ENCODE measurements at regions of chr20 and their contacts with region 1.

Region 1: GRCh38 chr20:18276821-18277220 is 11.5 kb upstream of the ZNF133 start:
- DNase-seq: peak; percentile 83
- ATAC-seq: peak; percentile 93
- H3K4me3 Mint-ChIP-seq: no peak overlapping the region
- H3K27ac Mint-ChIP-seq: no peak overlapping the region
- H3K4me1 Mint-ChIP-seq: peaks cover 4% of the 10 kb centered on the region
- H3K27me3 Mint-ChIP-seq: peaks cover 32% of the 10 kb centered on the region
- CTCF ChIP-seq: peak; percentile 87

Region 2: DNA sequence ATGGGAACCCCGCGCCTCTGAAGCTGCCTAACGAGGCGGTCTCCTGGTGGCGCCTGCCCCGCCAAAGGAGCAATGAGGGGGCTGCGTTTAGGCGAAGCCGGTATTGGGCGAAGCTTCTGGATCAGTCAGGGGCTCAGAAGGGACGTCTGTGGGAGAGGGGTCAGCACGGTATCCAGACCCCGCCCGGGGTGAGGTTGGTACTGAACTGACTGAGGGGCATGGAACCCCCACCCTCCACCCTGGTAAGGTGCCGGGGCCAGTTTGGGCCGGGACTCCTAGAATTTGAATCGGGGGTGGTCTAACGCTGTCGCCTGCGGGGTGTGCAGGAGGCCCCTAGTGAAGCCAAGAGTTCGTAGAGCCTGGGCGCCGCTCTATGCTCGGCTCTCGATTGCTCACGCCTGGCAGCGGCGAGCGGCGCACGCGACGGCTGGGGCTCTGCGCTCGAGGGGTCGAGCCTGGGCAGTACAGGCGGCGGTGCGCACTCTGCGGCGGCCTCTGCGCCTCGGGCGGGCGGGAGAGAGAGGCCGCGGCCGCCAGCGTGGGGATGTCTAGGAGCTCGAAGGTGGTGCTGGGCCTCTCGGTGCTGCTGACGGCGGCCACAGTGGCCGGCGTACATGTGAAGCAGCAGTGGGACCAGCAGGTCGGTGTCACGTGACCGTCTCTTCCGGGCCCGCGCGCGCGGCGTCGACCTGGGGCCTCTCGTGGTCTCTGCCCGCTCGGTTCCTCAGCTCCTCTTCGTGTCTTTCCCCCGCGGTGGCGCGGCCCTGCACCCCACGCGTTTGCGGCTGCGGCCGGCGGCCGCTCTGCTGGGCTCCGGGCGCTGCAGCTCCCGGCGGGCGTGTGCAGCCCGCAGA is 139.2 kb before region 1 on chr20 and contains the starts of genes KAT14 and PET117:
- CTCF ChIA-PET with region 1: no interaction called
- POLR2A ChIA-PET with region 1: no interaction called
- intact Hi-C with region 1: loop called (anchors 5 kb)
- DNase-seq: peak; percentile 89
- ATAC-seq: peak; percentile 92
- H3K4me3 Mint-ChIP-seq: peak within 1 kb of the TSS; percentile 71
- H3K27ac Mint-ChIP-seq: peak within 1 kb of the TSS; percentile 90
- H3K4me1 Mint-ChIP-seq: peaks cover 30% of the 10 kb centered on the region
- H3K27me3 Mint-ChIP-seq: no peaks in the 10 kb centered on the region
- CTCF ChIP-seq: no peak
- total RNA-seq, gene KAT14: 17.9 to 18.4 TPM
- total RNA-seq, gene PET117: 17.2 to 19.4 TPM

Region 3: DNA sequence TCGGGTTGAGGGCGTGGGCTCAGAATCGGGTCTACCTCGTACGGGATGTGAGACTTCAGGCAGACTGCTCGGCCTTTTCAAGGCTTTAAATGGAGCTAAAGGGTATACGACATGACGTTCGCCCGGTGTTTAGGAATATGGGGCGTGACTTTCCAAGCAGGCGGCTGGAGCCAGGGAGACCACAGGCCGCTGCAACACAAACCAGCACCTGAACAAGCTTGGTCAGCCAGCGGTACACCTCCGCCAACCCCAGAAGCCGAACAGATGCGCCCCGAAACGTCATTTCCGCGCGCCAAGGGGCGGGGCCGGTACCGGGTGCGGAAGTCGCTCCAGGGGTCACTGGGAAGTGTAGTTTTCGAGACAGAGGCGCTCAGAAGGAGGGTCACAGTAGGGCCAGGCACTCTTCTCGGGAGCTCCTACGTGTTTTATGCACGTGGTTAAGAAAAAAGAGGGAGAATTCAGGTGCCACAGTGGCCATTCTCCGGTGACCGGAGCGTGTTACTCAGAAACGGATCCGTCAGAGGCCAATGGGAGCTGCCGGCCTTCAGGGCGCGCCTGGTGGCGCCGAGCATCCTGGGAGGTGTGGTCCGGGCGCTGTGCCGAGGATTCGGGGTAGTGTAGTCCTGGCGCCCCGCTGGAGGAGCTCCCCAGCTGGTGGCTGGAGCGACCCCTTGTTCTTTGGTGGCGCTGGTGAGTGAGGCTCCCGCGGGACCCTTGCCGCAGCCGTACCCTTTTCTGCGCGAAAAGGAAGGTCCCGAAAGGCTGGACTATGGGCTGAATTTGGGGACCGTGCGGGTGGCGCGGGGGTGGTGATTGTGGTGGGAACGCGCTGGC is 11.3 kb after region 1 on chr20 and contains the start of gene ZNF133:
- CTCF ChIA-PET with region 1: interaction called, 10 read pairs
- POLR2A ChIA-PET with region 1: no interaction called
- intact Hi-C with region 1: no loop called
- DNase-seq: peak; percentile 98
- ATAC-seq: peak; percentile 97
- H3K4me3 Mint-ChIP-seq: peak within 1 kb of the TSS; percentile 96
- H3K27ac Mint-ChIP-seq: peak within 1 kb of the TSS; percentile 99
- H3K4me1 Mint-ChIP-seq: peaks cover 15% of the 10 kb centered on the region
- H3K27me3 Mint-ChIP-seq: peaks cover 10% of the 10 kb centered on the region
- CTCF ChIP-seq: peak; percentile 11
- total RNA-seq, gene ZNF133: 8.0 TPM

Measured in activated CD8-positive, alpha-beta T cell treated with anti-CD3 and anti-CD28 coated beads for 36 hours (primary cell).